Prostate gland (tissue), 2 donors: ENCODE measurements at regions of chr2 and their contacts with region 1.

Region 1: DNA sequence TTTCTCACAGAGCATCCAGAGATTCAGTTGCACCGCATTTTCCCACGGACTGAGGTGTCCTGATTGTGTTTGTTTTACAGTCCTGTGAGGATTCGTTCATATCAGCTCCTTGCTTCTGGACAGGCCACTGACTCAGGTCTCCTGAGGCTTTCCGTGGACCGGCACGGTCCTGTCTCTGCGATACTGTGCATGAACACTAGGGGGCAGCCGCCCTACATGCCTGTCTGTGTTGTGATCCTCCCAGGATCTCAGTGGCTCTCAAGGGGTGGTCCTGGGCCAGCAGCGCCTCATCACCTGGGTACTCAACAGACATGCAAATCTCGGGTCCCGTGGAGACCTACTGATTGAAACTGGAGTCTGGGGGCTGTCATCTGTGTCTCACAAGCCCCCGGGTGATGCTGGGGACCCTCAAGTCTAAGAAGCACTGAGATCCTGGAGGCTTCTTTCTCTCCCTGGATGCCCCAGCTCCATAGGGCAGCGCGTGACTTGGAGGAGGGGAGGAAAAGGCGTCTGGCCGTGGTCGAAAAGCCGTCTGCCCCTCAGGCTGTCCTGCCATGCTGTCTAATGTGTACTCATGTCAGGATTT is 28.9 kb downstream of the IL1R2 start:
- DNase-seq: peak; percentile 85
- H3K4me3 ChIP-seq: no peak overlapping the region
- H3K27ac ChIP-seq: peak overlapping the region in 1 of 2 donors; percentile 42
- H3K4me1 ChIP-seq: peaks cover 3% of the 10 kb centered on the region
- H3K27me3 ChIP-seq: no peaks in the 10 kb centered on the region
- CTCF ChIP-seq: peak; percentile 90 to 99 (median 98)
- POLR2A ChIP-seq: no peak

Region 2: DNA sequence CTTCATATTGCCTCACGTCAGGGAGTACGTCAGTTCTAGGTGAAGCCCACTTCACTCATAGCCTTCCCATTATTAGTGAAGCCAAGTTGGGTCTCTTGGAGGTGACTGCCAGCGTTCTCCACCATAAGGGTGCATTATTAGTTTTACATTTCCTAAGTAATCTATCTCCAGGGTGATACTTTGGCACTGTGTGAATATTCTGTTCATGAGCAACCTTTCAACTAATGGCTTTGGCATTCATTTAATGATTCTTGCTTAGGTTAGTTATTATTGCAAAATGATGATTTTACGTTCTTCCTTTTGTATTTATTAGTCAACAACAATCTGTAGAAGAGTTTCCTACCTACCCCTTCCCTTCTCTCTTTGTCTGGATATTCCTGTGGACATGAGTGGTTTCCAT is 225.7 kb before region 1 on chr2:
- intact Hi-C with region 1: no loop called
- DNase-seq: no peak
- H3K4me3 ChIP-seq: no peak overlapping the region
- H3K27ac ChIP-seq: no peak overlapping the region
- H3K4me1 ChIP-seq: no peaks in the 10 kb centered on the region
- H3K27me3 ChIP-seq: no peaks in the 10 kb centered on the region
- CTCF ChIP-seq: no peak
- POLR2A ChIP-seq: no peak

Region 3: DNA sequence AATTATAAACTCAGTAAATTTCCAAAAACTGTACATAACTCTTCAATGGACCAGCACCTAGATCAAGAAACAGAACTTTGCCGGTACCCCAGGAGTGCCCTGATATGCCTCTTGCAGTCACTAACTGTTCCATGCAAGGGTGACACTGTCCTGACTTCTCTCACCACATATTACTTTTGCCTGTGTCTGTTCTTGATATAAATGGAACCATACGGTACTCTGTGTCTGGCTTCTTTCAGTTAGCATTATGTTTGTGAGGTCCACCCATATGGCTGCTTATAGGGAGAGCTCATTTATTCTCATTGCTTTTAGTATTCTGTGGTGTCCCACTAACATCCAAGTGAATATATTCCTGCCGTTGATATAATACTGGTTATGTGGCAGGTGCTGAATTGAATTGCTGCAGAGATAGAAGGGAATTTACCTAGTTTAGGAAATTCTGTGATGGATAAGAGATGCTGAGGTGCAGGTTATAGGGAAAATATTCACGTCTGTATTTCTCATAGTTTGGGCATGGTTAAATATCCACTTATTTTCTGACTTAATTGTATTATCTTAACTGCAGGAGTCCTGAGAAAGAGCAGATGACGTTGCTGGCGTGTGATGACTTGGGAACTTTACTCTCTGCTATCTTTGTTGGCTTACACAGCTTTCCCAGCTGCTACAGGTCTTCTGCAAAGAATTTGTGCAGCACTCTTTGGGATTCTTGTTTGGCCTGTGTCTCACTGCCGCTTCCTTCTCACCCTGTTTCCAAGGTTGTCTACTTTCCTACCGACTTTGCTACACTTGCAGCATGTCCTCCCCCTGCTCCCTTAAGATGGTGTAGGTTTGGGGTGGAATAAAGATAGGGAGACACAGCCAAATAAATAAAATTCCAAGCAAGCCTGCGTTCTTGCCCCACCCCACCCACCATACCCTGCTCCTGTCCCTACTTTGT is 215.3 kb before region 1 on chr2:
- intact Hi-C with region 1: no loop called
- DNase-seq: no peak
- H3K4me3 ChIP-seq: no peak overlapping the region
- H3K27ac ChIP-seq: no peak overlapping the region
- H3K4me1 ChIP-seq: no peaks in the 10 kb centered on the region
- H3K27me3 ChIP-seq: no peaks in the 10 kb centered on the region
- CTCF ChIP-seq: no peak
- POLR2A ChIP-seq: no peak

Region 4: GRCh38 chr2:101854877-101855276 is 165.8 kb before region 1 on chr2:
- intact Hi-C with region 1: no loop called
- DNase-seq: no peak
- H3K4me3 ChIP-seq: no peak overlapping the region
- H3K27ac ChIP-seq: no peak overlapping the region
- H3K4me1 ChIP-seq: no peaks in the 10 kb centered on the region
- H3K27me3 ChIP-seq: no peaks in the 10 kb centered on the region
- CTCF ChIP-seq: no peak
- POLR2A ChIP-seq: no peak

Region 5: DNA sequence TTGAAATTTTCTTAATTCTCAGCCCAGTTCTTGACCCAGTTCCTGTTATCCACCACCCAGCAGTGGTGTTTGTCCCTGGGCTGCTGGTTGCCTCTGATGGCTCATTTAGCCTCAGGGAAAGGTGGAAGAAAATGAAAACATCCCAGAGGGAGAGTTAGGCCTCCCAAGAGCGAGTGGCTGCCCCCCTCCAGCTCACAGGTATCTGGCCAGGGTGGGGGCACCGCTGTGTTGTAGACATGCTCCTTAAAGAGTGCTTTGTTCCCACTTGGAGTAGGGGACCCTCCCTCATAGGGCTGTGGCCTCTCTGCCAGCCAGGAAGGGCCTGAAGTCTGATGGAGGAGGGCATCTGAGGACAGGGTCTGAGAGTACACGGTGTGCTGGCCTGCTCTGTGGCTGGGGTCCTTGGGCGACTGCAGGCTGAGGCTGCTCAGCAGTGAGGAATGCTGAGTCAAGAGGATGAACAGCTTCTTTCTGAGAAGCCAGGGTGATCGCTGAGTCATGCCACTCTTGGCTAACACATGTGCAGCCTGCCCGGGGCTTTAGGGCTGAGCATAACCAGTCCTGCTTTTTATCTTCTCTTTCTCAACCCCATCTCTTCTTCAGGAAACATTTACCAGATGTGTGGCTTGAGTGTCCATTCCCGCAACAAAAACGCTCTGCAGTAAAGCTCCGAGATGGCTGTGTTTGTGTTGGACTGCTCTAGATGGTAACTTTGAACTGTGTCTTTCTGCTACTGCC is 43.4 kb after region 1 on chr2:
- intact Hi-C with region 1: loop called (anchors 5 kb)
- DNase-seq: peak; percentile 81
- H3K4me3 ChIP-seq: no peak overlapping the region
- H3K27ac ChIP-seq: peak overlapping the region; percentile 77 to 80
- H3K4me1 ChIP-seq: peaks cover 11% of the 10 kb centered on the region
- H3K27me3 ChIP-seq: no peaks in the 10 kb centered on the region
- CTCF ChIP-seq: no peak
- POLR2A ChIP-seq: no peak

Region 6: DNA sequence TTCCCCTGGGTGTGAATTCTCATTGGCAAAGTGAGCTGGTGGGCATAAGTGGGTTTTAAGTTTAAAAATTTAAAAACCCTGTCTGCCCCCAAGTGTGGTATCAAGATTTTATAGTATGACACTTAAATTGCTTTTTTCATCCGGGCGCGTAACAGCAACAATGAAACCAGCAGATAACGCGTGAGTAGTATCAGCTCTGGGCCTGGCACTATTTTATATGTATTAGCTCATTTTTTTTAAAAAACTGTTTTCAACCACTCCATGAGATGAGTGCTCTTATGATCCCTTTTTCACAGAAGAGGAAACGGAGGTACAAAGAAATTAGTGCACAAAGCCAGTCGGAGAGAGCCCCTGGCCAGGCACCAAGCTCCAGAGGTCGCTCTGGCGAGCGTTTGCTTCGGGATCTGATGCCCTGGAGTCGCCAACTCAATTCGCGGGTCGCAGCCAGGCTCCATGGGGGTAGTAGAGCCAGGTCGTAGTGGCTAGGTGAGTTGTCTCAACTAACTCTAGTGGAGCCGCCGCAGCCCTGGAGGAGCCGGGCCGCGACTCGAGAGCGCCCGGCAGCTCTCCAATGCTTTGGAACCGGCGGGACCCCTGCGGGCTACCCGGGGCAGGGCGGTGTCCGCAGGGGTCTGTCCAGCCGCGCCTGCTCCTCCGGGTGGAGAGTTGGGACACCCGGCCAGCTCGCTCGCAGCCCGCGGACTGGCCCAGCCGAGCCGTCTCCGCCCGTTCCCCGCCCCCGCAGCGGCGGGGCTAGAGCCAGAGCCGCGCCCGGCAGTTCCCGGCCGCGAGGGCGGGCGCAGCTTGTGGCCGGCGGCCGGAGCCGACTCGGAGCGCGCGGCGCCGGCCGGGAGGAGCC is 121.5 kb after region 1 on chr2 and contains the start of gene IL1R1:
- intact Hi-C with region 1: no loop called
- DNase-seq: peak; percentile 62
- H3K4me3 ChIP-seq: peak within 1 kb of the TSS; percentile 67 to 75
- H3K27ac ChIP-seq: peak within 1 kb of the TSS; percentile 98
- H3K4me1 ChIP-seq: peaks cover 5% of the 10 kb centered on the region
- H3K27me3 ChIP-seq: no peaks in the 10 kb centered on the region
- CTCF ChIP-seq: no peak
- POLR2A ChIP-seq: peak; percentile 73
- total RNA-seq, gene IL1R1: 112 to 289 TPM

Region 7: GRCh38 chr2:102166189-102166845 is 145.6 kb after region 1 on chr2:
- intact Hi-C with region 1: loop called (anchors 1 kb)
- DNase-seq: peak; percentile 47
- H3K4me3 ChIP-seq: no peak overlapping the region
- H3K27ac ChIP-seq: peak overlapping the region; percentile 10 to 44
- H3K4me1 ChIP-seq: peaks cover 3% of the 10 kb centered on the region
- H3K27me3 ChIP-seq: no peaks in the 10 kb centered on the region
- CTCF ChIP-seq: peak; percentile 22 to 78 (median 65)
- POLR2A ChIP-seq: no peak

Region 8: DNA sequence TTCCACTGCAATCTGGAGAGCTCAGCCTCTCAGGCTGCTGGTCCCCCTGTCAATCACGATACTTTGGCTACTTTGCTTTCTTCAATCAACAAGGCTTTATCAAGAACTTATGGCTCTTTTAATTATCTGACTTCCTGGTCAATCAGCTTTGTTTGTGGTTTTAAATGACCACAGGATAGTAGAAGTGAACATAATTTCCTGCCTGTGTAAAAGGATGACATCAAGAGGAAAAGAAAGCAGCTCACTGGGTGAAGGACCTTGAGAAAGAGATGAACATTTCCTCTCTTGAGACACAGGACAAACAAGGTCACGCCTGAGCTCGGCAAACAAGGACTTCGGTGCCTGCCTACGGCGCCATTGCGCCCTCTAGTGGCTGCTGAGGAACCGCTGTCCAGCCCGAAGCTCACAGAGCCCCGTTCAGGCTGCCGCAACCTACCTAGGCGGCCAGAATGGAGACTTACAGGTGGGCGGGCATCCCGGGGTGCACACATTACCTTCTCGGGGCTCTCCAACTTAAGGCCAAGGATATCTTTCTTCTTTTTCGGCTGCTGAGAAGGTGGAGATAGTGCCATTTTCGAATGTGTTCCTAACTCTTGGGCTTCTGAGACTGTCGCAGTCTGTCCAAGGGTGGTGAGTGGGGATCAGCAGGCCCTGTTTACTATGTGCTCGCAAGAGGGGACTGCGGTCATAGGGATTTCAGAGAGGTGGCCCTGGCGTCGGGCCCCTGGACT is 220.1 kb after region 1 on chr2:
- intact Hi-C with region 1: loop called (anchors 2 kb)
- DNase-seq: peak; percentile 93
- H3K4me3 ChIP-seq: no peak overlapping the region
- H3K27ac ChIP-seq: peak overlapping the region; percentile 52 to 64
- H3K4me1 ChIP-seq: no peaks in the 10 kb centered on the region
- H3K27me3 ChIP-seq: no peaks in the 10 kb centered on the region
- CTCF ChIP-seq: peak; percentile 93 to 99 (median 98)
- POLR2A ChIP-seq: no peak

Region 9: GRCh38 chr2:102355526-102356380 is 335.1 kb after region 1 on chr2 and contains the start of gene IL18R1:
- intact Hi-C with region 1: loop called (anchors 10 kb)
- DNase-seq: peak; percentile 65
- H3K4me3 ChIP-seq: peak within 1 kb of the TSS; percentile 65 to 68
- H3K27ac ChIP-seq: peak within 1 kb of the TSS; percentile 56 to 70
- H3K4me1 ChIP-seq: no peaks in the 10 kb centered on the region
- H3K27me3 ChIP-seq: no peaks in the 10 kb centered on the region
- CTCF ChIP-seq: peak; percentile 53 to 84 (median 73)
- POLR2A ChIP-seq: no peak
- total RNA-seq, gene IL18R1: 0.91 to 1.5 TPM